AG04450 (cell line): ENCODE measurements at regions of chr3 and their contacts with region 1.

Region 1: GRCh38 chr3:150462108-150462507 is 54.0 kb downstream of the TSC22D2 start:
- DNase-seq: no peak
- H3K4me3 ChIP-seq: no peak overlapping the region
- H3K27ac ChIP-seq: no peak overlapping the region
- H3K27me3 ChIP-seq: no peaks in the 10 kb centered on the region
- CTCF ChIP-seq: no peak

Region 2: GRCh38 chr3:150446470-150446977 is 15.6 kb before region 1 on chr3:
- CTCF ChIA-PET with region 1: no interaction called
- POLR2A ChIA-PET with region 1: interaction called, 13 read pairs
- DNase-seq: no peak
- H3K4me3 ChIP-seq: no peak overlapping the region
- H3K27ac ChIP-seq: no peak overlapping the region
- H3K27me3 ChIP-seq: no peaks in the 10 kb centered on the region
- CTCF ChIP-seq: no peak

Region 3: DNA sequence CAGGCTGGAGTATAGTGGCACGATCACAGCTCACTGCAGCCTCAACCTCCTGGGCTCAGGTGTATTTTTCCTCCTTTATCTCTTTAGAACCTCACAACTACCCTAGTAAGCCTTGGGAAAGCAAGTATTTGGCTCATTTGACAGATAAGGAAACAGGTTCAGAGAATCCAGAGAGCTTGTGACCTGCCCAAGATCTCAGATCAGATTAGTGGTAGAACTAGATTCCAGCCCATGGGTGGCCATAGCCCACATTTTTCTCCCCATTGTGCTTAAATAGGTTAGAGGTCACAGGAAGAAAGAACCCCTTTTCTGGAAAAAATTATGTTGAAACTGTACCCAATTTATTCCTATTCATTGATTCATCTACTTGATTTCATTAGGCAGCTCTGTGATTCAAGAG is 10.3 kb after region 1 on chr3:
- CTCF ChIA-PET with region 1: no interaction called
- POLR2A ChIA-PET with region 1: no interaction called
- DNase-seq: no peak
- H3K4me3 ChIP-seq: no peak overlapping the region
- H3K27ac ChIP-seq: no peak overlapping the region
- H3K27me3 ChIP-seq: no peaks in the 10 kb centered on the region
- CTCF ChIP-seq: no peak